Mammary epithelial cell (primary cell): ENCODE measurements at regions of chr20 and their contacts with region 1.

Region 1: GRCh38 chr20:62623488-62624324 is 18.6 kb upstream of the SLCO4A1 start:
- DNase-seq: peak; percentile 91
- H3K4me3 ChIP-seq: no peak overlapping the region
- H3K27ac ChIP-seq: peak overlapping the region; percentile 87
- H3K4me1 ChIP-seq: peaks cover 22% of the 10 kb centered on the region
- H3K27me3 ChIP-seq: no peaks in the 10 kb centered on the region
- CTCF ChIP-seq: peak in 1 of 2 donors; percentile 9

Region 2: DNA sequence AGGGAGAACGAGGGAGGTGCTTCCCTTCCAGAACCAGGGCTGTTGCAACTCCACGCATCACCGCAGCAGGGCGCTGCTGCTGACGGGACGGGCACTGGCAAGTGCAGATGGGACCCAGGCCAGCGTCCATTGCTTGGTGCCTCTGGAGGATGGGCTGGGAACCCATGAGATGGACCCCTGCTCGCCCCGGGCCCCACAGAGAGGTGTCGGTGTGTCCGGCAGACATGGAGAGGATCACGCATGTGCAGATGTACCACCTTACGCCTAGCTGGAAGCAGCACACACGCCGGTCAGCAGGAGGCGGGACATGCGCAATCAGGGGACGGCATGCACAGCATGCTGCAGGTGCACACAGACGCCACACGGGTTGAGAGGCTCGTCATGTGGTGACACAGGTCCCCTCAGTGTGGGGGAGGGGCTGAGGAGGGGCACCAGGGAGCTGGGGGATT is 222.4 kb before region 1 on chr20:
- CTCF ChIA-PET with region 1: interaction called, 16 read pairs
- dilution Hi-C with region 1: no loop called
- in situ Hi-C with region 1: loop called in 1 of 2 experiments (anchors 25 kb)
- intact Hi-C with region 1: loop called (anchors 5 kb)
- DNase-seq: no peak
- H3K4me3 ChIP-seq: no peak overlapping the region
- H3K27ac ChIP-seq: no peak overlapping the region
- H3K4me1 ChIP-seq: peaks cover 10% of the 10 kb centered on the region
- H3K27me3 ChIP-seq: no peaks in the 10 kb centered on the region
- CTCF ChIP-seq: peak; percentile 34 to 40